CD8-positive, alpha-beta memory T cell (primary cell): ENCODE measurements at regions of chr14 and their contacts with region 1.

Region 1: DNA sequence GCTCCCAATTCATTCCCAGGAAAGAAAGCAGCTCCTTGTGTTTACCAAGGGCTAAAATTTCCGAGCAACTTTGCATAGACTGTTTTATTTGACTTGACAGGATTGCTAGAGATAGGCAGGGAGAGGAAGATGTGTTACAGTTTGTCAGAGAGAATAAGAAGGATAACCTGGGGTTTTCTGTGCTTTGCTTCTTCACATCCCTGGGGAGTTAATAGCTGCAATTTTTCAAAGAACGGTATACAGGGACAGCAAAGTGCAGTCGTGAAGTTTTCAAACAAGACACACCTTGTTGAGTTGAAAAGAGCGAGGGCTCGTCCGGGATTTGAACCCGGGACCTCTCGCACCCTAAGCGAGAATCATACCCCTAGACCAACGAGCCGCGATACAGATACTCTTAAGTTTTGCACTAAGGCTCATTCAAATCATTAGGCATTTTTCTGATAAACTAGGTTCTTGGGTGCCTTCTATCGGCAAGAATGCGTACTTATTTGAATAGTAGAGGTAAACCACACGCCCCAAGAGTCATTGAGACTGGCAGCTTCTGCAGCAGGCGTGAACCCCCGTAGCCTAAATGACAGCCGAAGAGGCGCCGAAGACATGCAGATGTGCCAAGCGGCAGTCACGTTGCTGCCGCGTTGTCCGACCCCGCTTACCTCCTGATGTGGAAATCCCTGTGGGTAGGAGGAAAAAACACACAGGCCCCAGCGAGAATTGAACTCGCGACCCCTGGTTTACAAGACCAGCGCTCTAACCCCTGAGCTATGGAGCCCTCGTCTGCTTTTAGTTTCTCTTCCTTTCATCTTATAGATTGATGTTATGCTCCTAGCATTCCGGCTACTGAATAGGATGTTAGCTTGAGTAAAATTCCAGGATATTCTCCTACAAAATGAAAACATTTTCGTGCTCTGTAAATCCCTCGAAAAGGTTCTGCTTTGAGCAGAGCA is 22.2 kb upstream of the RNASE12 start:
- DNase-seq: peak; percentile 66 to 93 (median 92)
- H3K4me3 ChIP-seq: peak overlapping the region; percentile 78
- H3K4me3 Mint-ChIP-seq: no peak overlapping the region
- H3K27ac ChIP-seq: no peak overlapping the region
- H3K27ac Mint-ChIP-seq: no peak overlapping the region
- H3K4me1 ChIP-seq: peaks cover 34% of the 10 kb centered on the region
- H3K4me1 Mint-ChIP-seq: peaks cover 0 to 18% (median 12%) of the 10 kb centered on the region in 3 donors
- H3K27me3 ChIP-seq: no peaks in the 10 kb centered on the region
- H3K27me3 Mint-ChIP-seq: peaks cover 0 to 3% of the 10 kb centered on the region in 2 donors

Region 2: DNA sequence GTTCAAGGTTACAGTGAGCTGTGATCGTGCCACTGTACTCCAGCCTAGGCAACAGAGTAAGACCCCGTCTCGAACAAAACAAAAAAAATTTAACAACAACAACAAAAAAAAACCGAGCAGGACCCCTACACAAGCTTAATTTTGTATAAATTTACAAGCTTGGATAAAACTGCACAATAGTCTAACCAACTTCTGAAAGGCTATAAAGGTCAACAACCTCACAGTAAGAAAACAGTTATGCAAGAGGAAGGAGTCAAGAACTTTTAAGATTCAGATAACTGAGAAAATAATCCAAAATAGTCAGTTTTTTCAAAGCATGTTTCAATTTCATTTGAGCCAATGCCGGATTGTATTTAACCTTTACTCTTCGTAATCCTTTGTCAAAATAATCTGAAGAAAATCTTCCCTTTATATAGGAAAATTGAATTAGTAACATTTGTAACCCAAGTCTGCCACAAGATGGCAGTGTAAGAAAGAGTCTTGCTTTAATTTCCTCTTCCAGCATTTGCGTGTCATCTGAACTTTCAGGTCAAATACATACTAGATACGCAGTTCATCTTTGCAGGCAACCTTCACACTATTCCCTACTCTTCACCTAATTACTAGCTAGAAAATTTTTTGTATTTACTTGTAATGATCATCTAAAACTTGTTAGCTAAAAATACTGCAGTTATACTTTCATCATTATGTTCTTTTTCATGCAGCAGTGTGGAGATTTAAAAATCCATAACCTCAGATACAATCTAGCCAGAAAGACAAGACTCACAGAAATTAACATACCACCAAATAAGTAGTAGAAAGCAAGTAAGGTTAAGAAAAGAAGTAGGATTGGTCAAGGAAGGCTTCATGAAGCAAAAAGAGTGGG is 286.1 kb before region 1 on chr14:
- CTCF ChIA-PET with region 1: interaction called, 144 read pairs
- POLR2A ChIA-PET with region 1: interaction called, 7 read pairs
- DNase-seq: peak in 3 of 5 donors; percentile 6 to 67 (median 60)
- H3K4me3 ChIP-seq: no peak overlapping the region
- H3K4me3 Mint-ChIP-seq: peak overlapping the region in 2 of 7 donors; percentile 26 to 33
- H3K27ac ChIP-seq: no peak overlapping the region
- H3K27ac Mint-ChIP-seq: peak overlapping the region; percentile 16 to 92 (median 78)
- H3K4me1 ChIP-seq: peaks cover under 1% of the 10 kb centered on the region
- H3K4me1 Mint-ChIP-seq: peaks cover 22 to 39% (median 27%) of the 10 kb centered on the region in 3 donors
- H3K27me3 ChIP-seq: no peaks in the 10 kb centered on the region
- H3K27me3 Mint-ChIP-seq: no peaks in the 10 kb centered on the region

Region 3: GRCh38 chr14:20343092-20343861 is 270.1 kb before region 1 on chr14 and contains the start of gene PARP2:
- CTCF ChIA-PET with region 1: interaction called, 20 read pairs
- POLR2A ChIA-PET with region 1: interaction called, 16 read pairs
- DNase-seq: peak; percentile 85 to 95 (median 93)
- H3K4me3 ChIP-seq: peak within 1 kb of the TSS; percentile 95
- H3K4me3 Mint-ChIP-seq: peak within 1 kb of the TSS; percentile 90 to 99 (median 98)
- H3K27ac ChIP-seq: peak within 1 kb of the TSS; percentile 87
- H3K27ac Mint-ChIP-seq: peak within 1 kb of the TSS; percentile 93 to 99 (median 98)
- H3K4me1 ChIP-seq: peaks cover 7% of the 10 kb centered on the region
- H3K4me1 Mint-ChIP-seq: peaks cover 15 to 27% (median 21%) of the 10 kb centered on the region in 3 donors
- H3K27me3 ChIP-seq: no peaks in the 10 kb centered on the region
- H3K27me3 Mint-ChIP-seq: peaks cover 0 to 7% of the 10 kb centered on the region in 2 donors
- total RNA-seq, gene PARP2: 35.0 to 41.3 TPM

Region 4: GRCh38 chr14:20413045-20413799 is 200.1 kb before region 1 on chr14 and contains the start of gene TEP1:
- CTCF ChIA-PET with region 1: interaction called, 25 read pairs
- POLR2A ChIA-PET with region 1: no interaction called
- DNase-seq: peak; percentile 67 to 80 (median 69)
- H3K4me3 ChIP-seq: peak within 1 kb of the TSS; percentile 91
- H3K4me3 Mint-ChIP-seq: peak within 1 kb of the TSS; percentile 92 to 99 (median 96)
- H3K27ac ChIP-seq: peak within 1 kb of the TSS; percentile 90
- H3K27ac Mint-ChIP-seq: peak within 1 kb of the TSS; percentile 92 to 100 (median 98)
- H3K4me1 ChIP-seq: peaks cover 23% of the 10 kb centered on the region
- H3K4me1 Mint-ChIP-seq: peaks cover 39 to 57% (median 57%) of the 10 kb centered on the region in 3 donors
- H3K27me3 ChIP-seq: no peaks in the 10 kb centered on the region
- H3K27me3 Mint-ChIP-seq: no peaks in the 10 kb centered on the region
- total RNA-seq, gene TEP1: 31.7 to 33.0 TPM

Region 5: DNA sequence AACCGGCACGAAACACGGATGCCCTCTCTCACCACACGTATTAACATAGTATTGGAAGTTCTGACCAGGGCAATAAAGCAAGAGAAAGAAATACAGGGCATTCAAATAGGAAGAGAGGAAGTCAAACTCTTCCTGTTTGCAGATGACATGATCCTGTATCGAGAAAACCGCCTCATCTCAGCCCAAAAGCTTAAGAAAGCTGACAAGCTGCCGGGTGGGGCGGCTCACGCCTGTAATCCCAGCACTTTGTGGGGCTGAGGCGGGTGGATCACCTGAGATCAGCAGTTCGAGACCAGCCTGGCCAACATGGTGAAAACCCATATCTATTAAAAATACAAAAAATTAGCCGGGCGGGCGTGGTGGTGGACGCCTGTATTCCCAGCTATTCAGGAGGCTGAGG is 10.4 kb after region 1 on chr14:
- CTCF ChIA-PET with region 1: interaction called, 18 read pairs
- POLR2A ChIA-PET with region 1: interaction called, 3 read pairs
- DNase-seq: no peak
- H3K4me3 ChIP-seq: no peak overlapping the region
- H3K4me3 Mint-ChIP-seq: peak overlapping the region; percentile 82 to 93 (median 86)
- H3K27ac ChIP-seq: no peak overlapping the region
- H3K27ac Mint-ChIP-seq: peak overlapping the region in 2 of 8 donors; percentile 61 to 62
- H3K4me1 ChIP-seq: peaks cover 42% of the 10 kb centered on the region
- H3K4me1 Mint-ChIP-seq: peaks cover 56 to 64% (median 62%) of the 10 kb centered on the region in 3 donors
- H3K27me3 ChIP-seq: no peaks in the 10 kb centered on the region
- H3K27me3 Mint-ChIP-seq: peaks cover 13 to 22% of the 10 kb centered on the region in 2 donors

Region 6: DNA sequence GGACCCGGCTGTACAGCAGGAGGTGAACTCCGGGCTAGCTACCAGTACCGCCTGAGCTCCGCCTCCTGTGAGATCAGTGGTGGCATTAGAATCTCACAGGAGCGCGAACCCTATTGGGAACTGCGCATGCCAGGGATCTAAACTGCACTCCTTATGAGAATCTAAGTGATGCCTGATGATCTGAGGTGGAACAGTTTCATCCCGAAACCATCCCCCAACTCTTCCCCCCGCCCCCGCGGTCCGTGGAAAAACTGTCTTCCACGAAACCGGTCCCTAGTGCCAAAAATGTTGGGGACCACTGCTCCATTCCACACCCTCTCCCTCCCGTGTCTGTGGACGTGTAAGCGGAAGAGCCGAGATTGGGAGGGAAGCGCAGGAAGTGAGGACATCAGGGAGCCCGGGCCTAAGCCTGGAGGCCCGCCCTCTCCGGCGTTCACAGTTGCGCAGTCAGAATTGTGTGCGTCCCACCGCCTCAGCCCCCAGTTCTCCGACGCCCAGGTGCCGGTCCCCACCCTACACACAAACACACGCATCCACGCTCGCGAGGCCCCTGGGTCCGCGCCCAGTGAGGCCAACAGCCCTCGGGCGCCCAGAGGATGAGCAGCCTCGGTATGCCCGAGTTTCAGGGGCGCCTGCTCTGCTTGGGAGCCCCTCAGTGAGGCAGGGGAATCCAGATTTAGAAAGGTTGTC is 69.2 kb after region 1 on chr14:
- CTCF ChIA-PET with region 1: interaction called, 34 read pairs
- POLR2A ChIA-PET with region 1: interaction called, 31 read pairs
- DNase-seq: peak; percentile 70 to 89 (median 81)
- H3K4me3 ChIP-seq: peak overlapping the region; percentile 97
- H3K4me3 Mint-ChIP-seq: no peak overlapping the region
- H3K27ac ChIP-seq: peak overlapping the region; percentile 96
- H3K27ac Mint-ChIP-seq: no peak overlapping the region
- H3K4me1 ChIP-seq: peaks cover 25% of the 10 kb centered on the region
- H3K4me1 Mint-ChIP-seq: peaks cover 6 to 10% (median 9%) of the 10 kb centered on the region in 3 donors
- H3K27me3 ChIP-seq: no peaks in the 10 kb centered on the region
- H3K27me3 Mint-ChIP-seq: peaks cover 0 to 4% of the 10 kb centered on the region in 2 donors